PC-9 (cell line): ENCODE measurements at regions of chr2 and their contacts with region 1.

Region 1: GRCh38 chr2:173075781-173076580 is at the start of gene MAP3K20:
- DNase-seq: peak; percentile 52 to 76
- H3K4me3 ChIP-seq: peak within 1 kb of the TSS; percentile 67
- H3K27ac ChIP-seq: peak within 1 kb of the TSS; percentile 61
- H3K4me1 ChIP-seq: peaks cover 56% of the 10 kb centered on the region
- H3K27me3 ChIP-seq: no peaks in the 10 kb centered on the region
- CTCF ChIP-seq: no peak
- total RNA-seq, gene MAP3K20: 58.5 and 60.5 TPM in 2 replicates

Region 2: GRCh38 chr2:172790404-172790803 is 285.6 kb before region 1 on chr2:
- CTCF ChIA-PET with region 1: no interaction called
- POLR2A ChIA-PET with region 1: no interaction called
- intact Hi-C with region 1: no loop called
- DNase-seq: no peak
- H3K4me3 ChIP-seq: no peak overlapping the region
- H3K27ac ChIP-seq: no peak overlapping the region
- H3K4me1 ChIP-seq: no peaks in the 10 kb centered on the region
- H3K27me3 ChIP-seq: no peaks in the 10 kb centered on the region
- CTCF ChIP-seq: no peak

Region 3: DNA sequence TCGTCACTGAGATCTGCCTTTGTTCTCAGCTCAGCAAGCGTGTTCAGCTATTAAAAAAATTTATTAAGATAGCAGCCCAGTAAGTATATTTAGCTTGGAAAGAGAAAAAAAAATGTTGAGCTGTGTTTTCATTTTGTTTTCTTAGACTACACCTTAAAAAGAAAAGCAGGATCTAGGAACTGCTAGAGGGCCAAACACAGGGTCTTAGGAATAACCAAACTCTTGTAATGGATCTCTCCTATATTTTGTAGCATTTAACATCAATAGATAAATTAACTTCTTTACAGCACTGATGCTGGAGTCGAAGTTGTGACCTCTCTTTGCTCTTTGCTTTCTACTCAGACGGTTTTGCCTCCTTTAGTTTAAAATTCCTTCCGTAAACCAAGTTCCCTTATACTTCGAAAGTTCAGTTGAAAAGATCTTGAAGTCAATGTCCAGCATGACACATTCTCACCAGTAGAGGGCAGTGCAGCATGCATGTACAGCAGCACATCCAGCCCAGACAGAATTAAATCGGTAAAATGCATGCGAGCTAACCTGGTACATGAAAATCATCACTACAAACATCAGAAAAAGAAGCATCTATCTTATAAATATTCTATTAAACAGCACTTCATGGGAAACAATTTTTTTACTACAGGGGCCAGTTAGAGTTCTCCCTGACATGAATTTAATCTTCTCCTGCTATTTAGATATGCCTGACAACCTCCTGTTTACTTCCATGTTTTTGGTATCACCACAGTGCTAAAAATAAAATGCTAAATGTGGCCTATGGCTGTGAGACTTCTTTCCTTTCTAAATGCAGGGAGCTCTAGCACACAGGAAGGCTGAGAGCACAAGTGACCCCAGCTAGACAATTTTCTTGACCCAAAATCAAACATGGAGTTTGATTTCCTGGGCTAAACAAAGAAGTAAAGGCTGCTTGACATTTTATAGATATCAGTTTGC is 48.5 kb before region 1 on chr2:
- CTCF ChIA-PET with region 1: interaction called, 3 read pairs
- POLR2A ChIA-PET with region 1: interaction called, 3 read pairs
- intact Hi-C with region 1: loop called (anchors 1 kb)
- DNase-seq: peak; percentile 73 to 84
- H3K4me3 ChIP-seq: no peak overlapping the region
- H3K27ac ChIP-seq: no peak overlapping the region
- H3K4me1 ChIP-seq: no peaks in the 10 kb centered on the region
- H3K27me3 ChIP-seq: no peaks in the 10 kb centered on the region
- CTCF ChIP-seq: peak; percentile 100

Region 4: GRCh38 chr2:173054466-173054865 is 21.5 kb before region 1 on chr2:
- CTCF ChIA-PET with region 1: no interaction called
- POLR2A ChIA-PET with region 1: interaction called, 11 read pairs
- intact Hi-C with region 1: loop called (anchors 1 kb)
- DNase-seq: peak in 1 of 2 experiments; percentile 75
- H3K4me3 ChIP-seq: no peak overlapping the region
- H3K27ac ChIP-seq: 0 out of 2 replicates have a peak overlapping the region, but pooled peaks have one; percentile 12
- H3K4me1 ChIP-seq: peaks cover 47% of the 10 kb centered on the region
- H3K27me3 ChIP-seq: no peaks in the 10 kb centered on the region
- CTCF ChIP-seq: no peak

Region 5: DNA sequence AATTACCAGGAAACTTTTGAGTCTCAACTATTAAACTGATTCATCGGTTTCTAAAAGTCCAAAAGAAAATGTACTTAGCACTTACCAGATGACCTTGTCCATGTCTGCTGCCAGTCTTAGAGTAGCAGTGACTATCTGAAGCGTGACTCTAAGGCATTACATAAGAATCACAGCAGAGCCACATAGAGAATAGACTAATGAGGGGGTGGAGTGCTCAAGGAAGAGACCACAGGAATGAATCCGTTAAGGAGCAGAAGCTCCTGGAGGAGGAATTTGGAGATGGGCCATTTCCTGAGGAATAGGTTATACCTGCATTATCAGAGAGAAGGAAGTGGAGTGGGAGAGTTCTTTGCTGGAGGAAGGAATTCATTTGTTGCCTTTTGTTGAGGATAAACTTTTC is 115.6 kb after region 1 on chr2:
- CTCF ChIA-PET with region 1: no interaction called
- POLR2A ChIA-PET with region 1: no interaction called
- intact Hi-C with region 1: loop called (anchors 5 kb)
- DNase-seq: peak; percentile 43 to 75
- H3K4me3 ChIP-seq: no peak overlapping the region
- H3K27ac ChIP-seq: no peak overlapping the region
- H3K4me1 ChIP-seq: peaks cover 9% of the 10 kb centered on the region; the same call in 1 of the 2 replicates
- H3K27me3 ChIP-seq: no peaks in the 10 kb centered on the region
- CTCF ChIP-seq: no peak

Region 6: DNA sequence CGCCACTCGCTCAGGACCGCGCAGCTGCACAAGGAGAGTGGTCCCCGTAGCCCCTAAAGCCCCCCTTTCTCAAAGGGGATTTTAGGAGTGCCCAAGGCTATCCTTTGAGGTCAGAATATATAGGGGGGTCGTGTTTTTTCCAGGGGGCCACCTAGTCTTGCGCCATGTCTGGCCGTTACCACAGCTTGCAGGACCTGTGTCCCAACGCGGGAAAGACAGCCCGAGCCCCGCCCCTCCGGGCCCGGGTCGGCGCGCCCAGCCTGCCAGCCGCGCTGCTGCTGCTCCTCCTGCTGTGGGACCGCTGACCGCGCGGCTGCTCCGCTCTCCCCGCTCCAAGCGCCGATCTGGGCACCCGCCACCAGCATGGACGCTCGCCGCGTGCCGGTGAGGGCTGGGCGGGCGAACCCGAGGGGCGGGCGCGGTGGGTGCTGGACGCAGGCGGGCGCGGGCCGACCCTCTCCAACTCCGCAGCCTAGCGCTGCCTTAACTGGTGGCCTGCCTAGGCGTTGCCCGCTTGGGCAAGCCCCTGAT is 278.7 kb after region 1 on chr2 and contains the start of gene CDCA7:
- CTCF ChIA-PET with region 1: interaction called, 12 read pairs
- POLR2A ChIA-PET with region 1: no interaction called
- intact Hi-C with region 1: no loop called
- DNase-seq: peak; percentile 68 to 85
- H3K4me3 ChIP-seq: peak within 1 kb of the TSS; percentile 97
- H3K27ac ChIP-seq: no peak within 1 kb of the TSS
- H3K4me1 ChIP-seq: peaks cover 20% of the 10 kb centered on the region
- H3K27me3 ChIP-seq: no peaks in the 10 kb centered on the region
- CTCF ChIP-seq: no peak
- total RNA-seq, gene CDCA7: 26.1 and 34.2 TPM in 2 replicates